ENCODE measurements at regions of chr6 and their contacts with region 1.

Region 1: DNA sequence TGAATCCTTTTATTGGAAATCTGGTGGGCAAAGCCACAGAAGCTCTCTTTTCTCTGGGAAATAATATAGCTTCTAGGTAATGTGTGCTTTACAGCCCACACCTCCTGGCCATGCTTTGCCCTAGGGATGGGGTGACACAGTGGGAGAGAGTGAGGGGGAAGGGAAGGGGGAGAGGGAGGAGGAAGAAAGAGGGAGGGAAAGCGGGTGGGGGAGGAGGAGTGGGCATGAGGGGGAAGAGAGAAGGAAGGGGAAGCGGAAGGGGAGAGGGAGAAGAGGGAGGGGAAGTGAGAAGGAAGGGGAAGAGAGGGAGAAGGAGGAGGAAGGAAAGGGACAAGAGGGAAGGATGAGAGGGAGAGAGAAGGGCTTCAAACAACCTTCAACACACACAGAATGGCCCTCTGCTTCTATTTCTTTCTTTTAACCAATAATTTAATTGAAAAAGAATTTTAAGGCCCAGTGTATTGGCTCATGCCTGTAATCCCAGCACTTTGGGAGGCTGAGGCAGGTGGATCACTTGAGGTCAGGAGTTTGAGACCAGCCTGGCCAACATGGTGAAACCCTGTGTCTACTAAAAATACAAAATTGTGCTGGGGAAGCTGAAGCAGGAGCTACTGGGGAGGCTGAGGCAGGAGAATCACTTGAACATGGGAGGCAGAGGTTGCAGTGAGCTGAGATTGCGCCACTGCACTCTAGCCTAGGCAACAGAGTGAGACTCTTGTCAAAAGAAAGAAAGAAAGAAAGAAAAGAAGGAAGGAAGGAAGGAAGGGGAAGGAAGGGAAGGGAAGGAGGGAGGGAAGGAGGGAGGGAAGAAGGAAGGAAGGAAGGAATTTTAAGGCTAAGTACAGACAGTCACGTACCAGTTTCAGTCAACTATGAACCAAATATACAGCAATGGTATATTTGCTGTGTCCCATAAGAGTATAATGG is 75.2 kb downstream of the RSPH3 start:
- DNase-seq: no peak
- H3K4me3 ChIP-seq: no peak overlapping the region
- H3K4me3 Mint-ChIP-seq: no peak overlapping the region
- H3K27ac ChIP-seq: no peak overlapping the region
- H3K27ac Mint-ChIP-seq: no peak overlapping the region
- H3K4me1 ChIP-seq: no peaks in the 10 kb centered on the region
- H3K4me1 Mint-ChIP-seq: peaks cover 0 to 7% (median 6%) of the 10 kb centered on the region in 3 donors
- H3K27me3 ChIP-seq: no peaks in the 10 kb centered on the region
- H3K27me3 Mint-ChIP-seq: no peaks in the 10 kb centered on the region

Region 2: DNA sequence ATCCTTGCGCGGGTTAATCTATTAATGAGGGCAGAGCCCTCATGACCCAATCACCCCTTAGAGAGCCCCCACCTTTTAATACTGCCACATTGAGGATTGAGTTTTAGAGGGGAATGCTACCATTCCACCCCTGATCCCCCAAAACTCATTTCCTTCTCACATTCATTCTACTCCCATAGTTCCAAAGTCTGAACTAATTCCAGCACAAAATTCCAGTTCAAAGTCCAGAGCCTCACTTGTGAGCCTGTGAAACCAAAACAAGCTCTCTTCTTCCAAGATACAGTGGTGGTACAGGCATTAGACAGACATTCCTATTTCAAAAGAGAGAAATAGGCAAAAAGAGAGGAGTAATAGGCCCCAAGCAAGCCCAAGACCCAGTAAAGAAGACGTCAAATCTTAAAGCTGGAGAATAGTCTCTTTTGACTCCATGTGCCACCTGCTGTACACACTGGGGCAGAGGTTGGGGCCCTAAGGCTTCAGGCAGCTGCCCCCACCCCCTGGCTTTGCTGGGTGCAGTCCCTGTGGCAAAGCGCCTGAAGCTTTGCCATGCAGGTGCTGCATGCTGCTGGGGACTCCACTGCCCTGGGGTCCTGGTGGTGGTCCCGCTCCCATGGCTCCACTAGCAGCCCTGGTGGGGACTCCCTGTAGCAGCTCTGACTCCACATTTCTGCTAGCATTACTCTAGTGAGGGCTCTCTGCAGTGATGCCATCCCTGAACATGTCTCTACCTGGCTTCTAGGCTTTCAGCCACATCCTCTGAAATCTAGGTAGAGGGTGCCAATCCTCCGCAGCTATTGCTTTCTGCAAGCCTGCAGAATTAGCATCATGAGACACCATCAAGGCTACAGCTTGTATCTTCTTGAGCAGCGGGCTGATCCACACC is 34.0 kb after region 1 on chr6:
- CTCF ChIA-PET with region 1: no interaction called
- POLR2A ChIA-PET with region 1: interaction called, 13 read pairs
- DNase-seq: peak in 1 of 5 donors; percentile 52
- H3K4me3 ChIP-seq: no peak overlapping the region
- H3K4me3 Mint-ChIP-seq: no peak overlapping the region
- H3K27ac ChIP-seq: no peak overlapping the region
- H3K27ac Mint-ChIP-seq: peak overlapping the region in 3 of 8 donors; percentile 12 to 81 (median 57)
- H3K4me1 ChIP-seq: no peaks in the 10 kb centered on the region
- H3K4me1 Mint-ChIP-seq: peaks cover 0 to 30% (median 4%) of the 10 kb centered on the region in 3 donors
- H3K27me3 ChIP-seq: no peaks in the 10 kb centered on the region
- H3K27me3 Mint-ChIP-seq: peaks cover 0 to 6% of the 10 kb centered on the region in 2 donors

Region 3: GRCh38 chr6:158991017-158991723 is 66.4 kb after region 1 on chr6:
- CTCF ChIA-PET with region 1: no interaction called
- POLR2A ChIA-PET with region 1: no interaction called
- DNase-seq: no peak
- H3K4me3 ChIP-seq: no peak overlapping the region
- H3K4me3 Mint-ChIP-seq: no peak overlapping the region
- H3K27ac ChIP-seq: no peak overlapping the region
- H3K27ac Mint-ChIP-seq: peak overlapping the region in 3 of 8 donors; percentile 34 to 60 (median 45)
- H3K4me1 ChIP-seq: peaks cover 11% of the 10 kb centered on the region
- H3K4me1 Mint-ChIP-seq: peaks cover 14 to 34% (median 20%) of the 10 kb centered on the region in 3 donors
- H3K27me3 ChIP-seq: no peaks in the 10 kb centered on the region
- H3K27me3 Mint-ChIP-seq: no peaks in the 10 kb centered on the region

Measured in CD8-positive, alpha-beta memory T cell (primary cell).